Cardiac septum (tissue), 1 donor: ENCODE measurements at regions of chr2 and their contacts with region 1.

Region 1: DNA sequence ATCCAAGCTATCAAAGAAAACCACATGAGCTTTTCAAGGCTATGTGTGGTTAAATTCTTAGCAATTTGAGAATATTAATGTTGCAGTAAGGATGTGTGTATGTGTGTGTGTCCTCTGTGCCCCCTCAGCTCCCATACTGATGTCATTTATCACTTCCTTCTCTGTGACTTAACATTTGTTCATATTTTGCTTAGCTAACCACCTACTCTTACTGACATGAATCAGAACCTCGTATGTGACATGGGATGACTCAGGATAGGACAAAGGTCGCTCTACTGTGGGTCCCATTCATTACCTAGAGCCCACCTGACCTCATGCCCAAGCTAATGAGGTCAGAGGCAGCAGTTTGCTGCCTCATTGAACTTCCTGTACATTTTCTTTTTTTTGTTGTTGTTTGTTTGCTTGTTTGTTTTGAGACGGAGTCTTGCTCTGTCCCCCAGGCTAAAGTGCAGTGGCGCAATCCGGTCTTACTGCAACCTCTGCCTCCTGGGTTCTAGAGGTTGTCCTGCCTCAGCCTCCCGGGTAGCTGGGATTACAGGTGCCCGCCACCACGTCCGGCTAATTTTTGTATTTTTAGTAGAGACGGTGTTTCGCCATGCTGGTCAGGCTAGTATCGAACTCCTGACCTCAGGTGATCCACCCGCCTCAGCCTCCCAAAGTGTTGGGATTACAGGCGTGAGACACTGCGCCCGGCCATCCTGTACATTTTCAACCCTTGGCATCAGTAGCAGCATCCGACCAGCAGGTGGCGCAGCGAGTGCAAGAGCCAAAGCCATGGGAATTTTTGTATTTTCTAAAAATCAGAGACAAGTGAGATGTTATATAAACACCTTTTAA is 36.4 kb downstream of the MOGAT1 start:
- DNase-seq: peak; percentile 89

Region 2: GRCh38 chr2:222792001-222792611 is 84.2 kb after region 1 on chr2:
- intact Hi-C with region 1: loop called (anchors 5 kb)
- DNase-seq: peak; percentile 79

Region 3: GRCh38 chr2:222860740-222861410 is 153.0 kb after region 1 on chr2 and contains the start of gene ACSL3:
- intact Hi-C with region 1: loop called (anchors 1 kb)
- DNase-seq: peak; percentile 99
- total RNA-seq, gene ACSL3: 37.4 TPM

Region 4: DNA sequence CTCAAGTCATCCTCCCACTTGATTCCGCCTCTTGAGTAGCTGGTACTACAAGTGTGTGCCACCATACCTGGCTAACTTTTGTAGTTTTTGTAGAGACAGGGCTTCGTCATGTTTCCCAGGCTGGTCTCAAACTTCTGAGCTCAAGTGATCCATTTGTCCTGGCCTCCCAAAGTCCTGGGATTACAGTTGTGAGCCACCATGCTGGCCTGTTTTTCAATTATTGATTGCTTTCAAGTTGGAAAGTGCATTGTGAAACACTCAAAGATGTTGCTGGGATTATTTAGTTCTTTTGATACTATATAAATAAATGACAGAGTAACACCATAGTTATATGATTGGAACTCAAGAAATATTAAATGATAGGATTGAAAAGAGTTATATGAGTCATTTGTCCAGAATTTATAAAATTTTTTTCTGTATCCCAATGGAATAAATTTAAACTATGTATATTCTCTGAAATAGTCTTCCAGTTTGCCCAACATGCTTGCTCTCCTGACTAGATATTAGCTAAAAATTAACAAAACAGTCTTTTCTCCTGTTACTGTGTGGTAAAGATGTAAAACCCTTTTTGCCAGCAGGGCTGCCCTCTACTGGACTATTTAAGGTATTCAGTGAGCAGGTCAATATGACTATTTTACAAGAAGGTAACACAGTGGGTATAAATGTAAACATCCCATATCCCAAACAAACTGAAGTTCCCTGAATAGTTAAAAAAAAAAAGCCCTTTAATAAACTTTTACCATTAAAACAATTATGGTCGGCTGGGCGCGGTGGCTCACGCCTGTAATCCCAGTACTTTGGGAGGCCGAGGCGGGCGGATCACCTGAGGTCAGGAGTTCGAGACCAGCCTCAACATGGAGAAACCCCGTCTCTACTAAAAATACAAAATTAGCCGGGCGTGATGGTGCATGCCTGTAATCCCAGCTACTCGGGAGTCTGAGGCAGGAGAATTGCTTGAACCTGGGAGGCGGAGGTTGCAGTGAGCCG is 195.6 kb after region 1 on chr2:
- intact Hi-C with region 1: loop called (anchors 2 kb)
- DNase-seq: no peak